ENCODE measurements at regions of chr12 and their contacts with region 1.

Region 1: DNA sequence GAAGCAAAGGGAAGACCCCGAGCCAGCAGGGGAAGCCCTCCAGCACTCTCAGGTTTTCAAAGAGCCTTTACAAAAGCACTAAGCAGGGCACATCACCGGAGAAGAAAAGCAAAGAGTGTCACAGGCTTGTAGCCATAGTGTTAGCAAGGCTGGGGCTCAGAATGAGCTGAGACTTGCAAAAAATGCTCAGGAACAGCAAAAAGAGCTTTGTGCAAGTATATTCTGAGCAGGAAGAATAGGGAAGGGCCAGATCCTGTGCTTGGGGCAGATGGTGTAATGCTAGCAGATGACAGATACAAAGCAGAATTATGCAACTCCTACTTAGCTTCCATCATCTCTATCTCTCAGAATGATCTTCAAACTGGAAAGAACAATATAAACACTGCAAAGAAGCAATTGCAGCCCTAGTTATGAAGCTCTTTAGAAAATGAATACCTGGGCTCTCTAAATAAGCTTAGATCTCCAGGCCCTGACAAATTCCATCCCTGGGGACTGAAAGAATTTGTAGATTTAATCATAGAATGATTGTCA is 23.7 kb upstream of the PARP11 start:
- DNase-seq: peak; percentile 22
- H3K4me3 ChIP-seq: no peak overlapping the region
- H3K27ac ChIP-seq: no peak overlapping the region
- H3K4me1 ChIP-seq: no peaks in the 10 kb centered on the region
- H3K27me3 ChIP-seq: peaks cover 33% of the 10 kb centered on the region

Region 2: DNA sequence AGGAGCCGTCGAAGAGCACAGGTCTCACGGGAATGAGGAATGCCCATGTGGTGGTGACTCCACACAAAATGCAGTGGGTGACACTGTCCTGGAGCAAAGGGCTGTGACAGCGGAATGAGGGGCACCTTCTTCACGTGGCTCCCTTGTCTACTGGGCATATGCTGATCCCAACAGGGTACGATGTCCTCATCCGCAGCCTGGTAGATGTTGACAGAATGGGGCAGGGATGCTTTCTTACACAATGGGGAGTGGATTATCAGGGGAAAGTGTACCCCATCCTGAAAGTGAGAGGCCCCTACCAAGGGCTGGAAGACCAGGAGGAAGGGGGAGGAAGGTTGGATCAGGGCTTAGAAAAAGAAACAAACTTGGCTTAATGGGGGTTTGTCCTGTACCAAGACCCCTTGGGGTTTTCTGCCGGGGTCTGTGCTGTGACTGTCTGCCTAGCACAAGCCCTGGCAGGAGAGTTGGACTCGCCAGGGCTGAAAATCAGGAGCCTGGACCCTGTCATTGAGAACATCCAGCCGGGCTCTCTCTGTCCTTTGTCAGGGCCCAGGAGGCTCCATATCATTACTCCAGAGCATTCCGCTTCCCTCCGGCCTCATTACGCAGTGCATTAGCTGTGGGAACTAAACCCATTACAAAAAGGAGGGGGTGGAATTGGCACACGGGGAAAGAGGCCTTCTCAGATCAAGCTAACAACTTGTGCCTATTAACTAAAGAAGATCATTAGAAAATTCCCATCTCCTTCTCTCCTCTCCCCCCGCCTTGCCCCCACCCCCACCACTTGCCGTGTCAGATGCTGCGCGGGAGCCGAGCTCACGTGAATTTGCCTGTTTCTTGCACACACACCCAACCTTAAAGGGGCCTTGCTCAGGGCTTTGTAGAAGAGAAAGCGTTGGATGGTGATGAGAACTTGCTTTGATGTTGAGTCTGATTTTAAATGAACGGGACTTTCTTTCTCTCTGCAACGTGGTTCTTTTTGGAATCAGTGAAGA is 148.2 kb after region 1 on chr12:
- in situ Hi-C with region 1: loop called (anchors 10 kb)
- DNase-seq: no peak
- H3K4me3 ChIP-seq: no peak overlapping the region
- H3K27ac ChIP-seq: no peak overlapping the region
- H3K4me1 ChIP-seq: no peaks in the 10 kb centered on the region
- H3K27me3 ChIP-seq: peaks cover 19% of the 10 kb centered on the region

Region 3: DNA sequence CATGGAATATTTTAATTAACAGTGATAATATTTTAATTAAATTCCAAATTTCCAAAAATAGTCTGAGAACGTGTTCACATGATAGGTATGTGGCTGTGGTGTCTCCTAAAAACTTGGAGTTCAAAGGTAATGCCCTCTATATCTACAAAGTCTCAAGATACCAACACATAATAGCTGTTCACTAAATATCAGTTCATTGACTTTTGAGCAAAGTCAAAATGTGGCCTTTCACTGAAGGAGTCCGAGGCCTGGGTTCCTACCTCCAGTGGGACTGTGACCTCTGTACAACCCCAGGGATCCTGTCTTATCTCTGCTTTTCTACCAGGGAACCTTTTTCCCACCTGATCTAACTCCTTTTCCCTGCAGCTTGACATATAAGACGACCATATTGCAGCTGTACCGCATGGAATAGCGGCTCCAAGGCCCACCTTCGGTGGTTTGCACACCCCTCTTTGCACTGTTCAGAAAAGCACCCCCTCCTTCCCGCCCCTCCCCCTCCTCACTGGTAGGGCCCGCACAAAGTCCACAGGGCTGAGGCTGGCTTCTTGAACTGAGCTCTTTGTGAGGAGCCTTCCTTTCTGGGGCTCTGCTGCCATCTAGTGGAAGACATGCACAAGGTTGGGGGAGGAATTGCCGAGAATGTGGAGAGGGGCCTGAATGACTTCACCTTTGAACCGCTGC is 379.8 kb after region 1 on chr12:
- in situ Hi-C with region 1: loop called (anchors 10 kb)
- DNase-seq: peak; percentile 80
- H3K4me3 ChIP-seq: no peak overlapping the region
- H3K27ac ChIP-seq: no peak overlapping the region
- H3K4me1 ChIP-seq: no peaks in the 10 kb centered on the region
- H3K27me3 ChIP-seq: peaks cover 71% of the 10 kb centered on the region